ENCODE measurements at regions of chr6 and their contacts with region 1.

Region 1: DNA sequence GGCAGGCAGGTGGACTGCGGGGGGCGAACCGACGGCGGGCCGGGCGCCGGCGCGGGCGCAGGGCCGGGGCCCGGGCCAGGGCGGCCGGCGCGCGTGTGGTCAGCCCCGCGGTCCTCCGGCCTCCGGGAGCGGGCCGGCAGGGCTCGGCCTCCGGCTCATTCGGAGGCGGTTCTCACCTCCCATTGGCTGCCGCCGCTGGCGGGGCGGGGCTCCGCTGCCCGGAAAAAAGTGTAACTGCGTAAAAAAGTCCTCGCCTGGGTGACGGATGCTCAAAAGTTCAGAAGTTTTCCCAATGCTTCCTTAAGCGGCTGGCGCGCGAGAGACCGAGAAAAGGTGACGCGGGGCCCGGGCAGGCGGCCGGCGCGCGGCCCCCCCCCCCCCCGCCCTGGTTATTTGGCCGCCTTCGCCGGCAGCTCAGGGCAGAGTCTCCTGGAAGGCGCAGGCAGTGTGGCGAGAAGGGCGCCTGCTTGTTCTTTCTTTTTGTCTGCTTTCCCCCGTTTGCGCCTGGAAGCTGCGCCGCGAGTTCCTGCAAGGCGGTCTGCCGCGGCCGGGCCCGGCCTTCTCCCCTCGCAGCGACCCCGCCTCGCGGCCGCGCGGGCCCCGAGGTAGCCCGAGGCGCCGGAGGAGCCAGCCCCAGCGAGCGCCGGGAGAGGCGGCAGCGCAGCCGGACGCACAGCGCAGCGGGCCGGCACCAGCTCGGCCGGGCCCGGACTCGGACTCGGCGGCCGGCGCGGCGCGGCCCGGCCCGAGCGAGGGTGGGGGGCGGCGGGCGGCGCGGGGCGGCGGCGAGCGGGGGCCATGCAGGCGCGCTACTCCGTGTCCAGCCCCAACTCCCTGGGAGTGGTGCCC is at the start of gene FOXC1:
- DNase-seq: peak; percentile 57
- H3K4me3 ChIP-seq: peak within 1 kb of the TSS; percentile 72
- CTCF ChIP-seq: no peak

Region 2: DNA sequence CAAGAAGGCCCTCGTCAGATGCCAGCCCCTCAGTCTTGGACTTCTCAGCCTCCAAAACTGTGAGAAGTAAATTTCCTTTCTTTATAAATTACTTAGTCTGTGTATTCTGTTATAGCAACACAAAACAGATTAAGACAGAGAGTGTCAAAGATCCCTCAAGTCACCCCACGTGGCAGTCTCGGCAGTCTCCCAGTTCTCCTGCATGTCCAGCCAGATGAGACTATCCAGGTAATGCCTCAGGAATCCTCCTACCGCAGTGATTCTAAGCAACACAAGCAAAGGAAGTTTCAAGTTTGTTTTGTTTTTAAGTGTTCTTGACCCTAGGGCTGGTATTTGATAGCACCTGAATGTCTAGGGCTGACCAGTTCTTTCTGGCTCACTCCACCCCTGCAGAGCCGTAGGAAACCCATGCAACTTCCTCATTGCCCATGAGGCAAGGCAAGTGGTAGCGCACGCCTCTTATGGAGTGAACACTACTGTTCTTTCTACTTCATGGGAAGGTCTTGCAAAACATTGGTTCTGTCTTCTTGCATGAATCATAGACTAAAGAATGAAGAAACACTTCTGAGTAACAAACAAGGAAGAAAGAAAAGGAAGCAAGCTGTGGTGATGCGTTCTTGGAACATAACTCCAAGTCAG is 322.8 kb before region 1 on chr6:
- CTCF ChIA-PET with region 1: no interaction called
- POLR2A ChIA-PET with region 1: no interaction called
- DNase-seq: no peak
- H3K4me3 ChIP-seq: no peak overlapping the region
- CTCF ChIP-seq: no peak

Region 3: GRCh38 chr6:1624851-1625781 is 15.2 kb after region 1 on chr6:
- CTCF ChIA-PET with region 1: interaction called, 31 read pairs
- POLR2A ChIA-PET with region 1: interaction called, 5 read pairs
- DNase-seq: no peak
- H3K4me3 ChIP-seq: peak overlapping the region; percentile 67
- CTCF ChIP-seq: no peak

Region 4: DNA sequence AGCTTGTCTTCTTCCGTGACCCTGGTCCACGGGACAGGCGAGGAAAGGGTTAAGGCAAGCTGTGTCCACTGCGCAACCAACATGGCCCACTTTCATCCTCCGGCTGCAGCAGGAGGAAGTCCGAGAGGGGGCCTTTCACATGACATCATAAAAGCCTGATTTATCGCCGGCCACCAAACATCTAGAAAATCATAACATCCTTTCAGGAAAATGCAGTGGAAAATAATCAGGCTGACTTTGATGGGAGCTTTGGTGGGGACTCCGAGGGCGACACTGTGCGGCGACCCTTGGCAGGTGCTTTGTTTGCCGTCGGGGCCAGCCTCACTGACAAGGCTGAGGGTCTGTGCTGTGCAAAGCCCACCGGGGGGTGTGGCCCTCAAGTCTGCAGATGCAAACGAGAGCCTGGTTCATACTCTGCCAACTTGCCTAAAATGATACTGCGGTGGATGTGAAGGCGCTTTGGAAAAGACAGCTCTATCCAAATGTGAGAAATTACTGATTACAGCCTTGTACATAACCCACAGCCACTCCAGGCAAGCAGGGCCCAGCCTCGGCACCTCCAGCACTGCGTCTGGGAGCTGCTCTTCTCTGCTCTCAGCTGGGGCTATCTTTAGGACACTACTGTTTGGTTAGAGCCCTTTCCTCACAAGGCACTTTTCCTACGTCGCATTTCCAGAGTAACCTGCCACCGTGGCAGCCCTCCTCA is 25.6 kb after region 1 on chr6:
- CTCF ChIA-PET with region 1: no interaction called
- POLR2A ChIA-PET with region 1: no interaction called
- DNase-seq: no peak
- H3K4me3 ChIP-seq: no peak overlapping the region
- CTCF ChIP-seq: no peak

Region 5: GRCh38 chr6:1686117-1687098 is 76.5 kb after region 1 on chr6:
- CTCF ChIA-PET with region 1: interaction called, 11 read pairs
- POLR2A ChIA-PET with region 1: interaction called, 3 read pairs
- DNase-seq: peak; percentile 99
- H3K4me3 ChIP-seq: peak overlapping the region; percentile 2; the same call in 1 of the 2 replicates
- CTCF ChIP-seq: no peak

Region 6: GRCh38 chr6:1701668-1702353 is 91.9 kb after region 1 on chr6:
- CTCF ChIA-PET with region 1: interaction called, 13 read pairs
- POLR2A ChIA-PET with region 1: interaction called, 7 read pairs
- DNase-seq: peak; percentile 95
- H3K4me3 ChIP-seq: peak overlapping the region; percentile 42
- CTCF ChIP-seq: no peak

Region 7: GRCh38 chr6:2097464-2097863 is 487.6 kb after region 1 on chr6:
- CTCF ChIA-PET with region 1: interaction called, 36 read pairs
- POLR2A ChIA-PET with region 1: no interaction called
- DNase-seq: no peak
- H3K4me3 ChIP-seq: no peak overlapping the region
- CTCF ChIP-seq: no peak

Region 8: DNA sequence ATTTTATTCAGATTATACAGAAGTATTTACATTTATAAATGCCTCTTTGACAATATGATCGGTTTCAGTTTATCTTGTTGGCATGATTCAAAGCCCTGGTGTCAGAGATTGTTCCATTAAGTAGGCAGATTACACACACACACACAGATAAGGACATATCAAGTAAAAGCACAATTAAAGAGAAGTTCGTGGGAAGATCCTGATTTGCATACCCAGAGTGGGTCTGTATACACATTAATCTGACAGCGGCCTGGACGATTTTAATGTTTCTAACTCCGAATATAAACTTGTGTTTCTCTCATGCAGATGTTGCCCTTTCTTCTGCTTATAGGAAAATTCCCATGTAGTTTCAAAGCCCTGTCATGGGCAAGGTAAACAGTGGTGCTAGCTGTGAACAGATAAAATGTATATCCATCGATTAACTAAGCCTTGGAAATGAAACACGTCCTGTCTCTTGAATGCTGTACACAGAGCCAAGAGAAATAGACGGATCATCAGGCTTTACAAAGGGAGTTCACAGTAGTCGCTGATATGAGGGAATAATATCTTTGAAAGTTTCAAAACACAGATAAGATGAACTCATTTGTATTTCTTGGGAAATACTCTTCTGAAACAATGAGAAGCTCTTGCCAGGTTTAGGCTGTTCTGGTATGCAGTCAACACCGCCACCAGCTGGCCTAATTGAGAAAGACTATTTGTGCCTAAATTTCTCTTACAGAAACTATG is 743.7 kb after region 1 on chr6:
- CTCF ChIA-PET with region 1: interaction called, 15 read pairs
- POLR2A ChIA-PET with region 1: no interaction called
- DNase-seq: peak; percentile 17
- H3K4me3 ChIP-seq: no peak overlapping the region
- CTCF ChIP-seq: peak; percentile 68

Measured in AG04449 (cell line).